CD8-positive, alpha-beta T cell (primary cell): ENCODE measurements at regions of chr17 and their contacts with region 1.

Region 1: GRCh38 chr17:41811549-41812380 is at the start of gene P3H4:
- DNase-seq: peak; percentile 51 to 89 (median 75)
- ATAC-seq: peak; percentile 87
- H3K4me3 ChIP-seq: peak within 1 kb of the TSS; percentile 73 to 93
- H3K4me3 Mint-ChIP-seq: peak within 1 kb of the TSS; percentile 93
- H3K27ac ChIP-seq: peak within 1 kb of the TSS in 1 of 2 experiments; percentile 35
- H3K27ac Mint-ChIP-seq: peak within 1 kb of the TSS; percentile 55
- H3K4me1 ChIP-seq: peaks cover 26% of the 10 kb centered on the region
- H3K4me1 Mint-ChIP-seq: peaks cover 23% of the 10 kb centered on the region
- H3K27me3 ChIP-seq: no peaks in the 10 kb centered on the region
- H3K27me3 Mint-ChIP-seq: peaks cover 2% of the 10 kb centered on the region
- CTCF ChIP-seq: peak; percentile 51
- total RNA-seq, gene P3H4: 0.89 to 1.0 TPM

Region 2: GRCh38 chr17:41750862-41751261 is 60.9 kb before region 1 on chr17:
- CTCF ChIA-PET with region 1: no interaction called
- POLR2A ChIA-PET with region 1: no interaction called
- intact Hi-C with region 1: no loop called
- DNase-seq: no peak
- ATAC-seq: no peak
- H3K4me3 ChIP-seq: no peak overlapping the region
- H3K4me3 Mint-ChIP-seq: no peak overlapping the region
- H3K27ac ChIP-seq: no peak overlapping the region
- H3K27ac Mint-ChIP-seq: no peak overlapping the region
- H3K4me1 ChIP-seq: no peaks in the 10 kb centered on the region
- H3K4me1 Mint-ChIP-seq: no peaks in the 10 kb centered on the region
- H3K27me3 ChIP-seq: no peaks in the 10 kb centered on the region
- H3K27me3 Mint-ChIP-seq: peaks cover 10% of the 10 kb centered on the region
- CTCF ChIP-seq: no peak

Region 3: DNA sequence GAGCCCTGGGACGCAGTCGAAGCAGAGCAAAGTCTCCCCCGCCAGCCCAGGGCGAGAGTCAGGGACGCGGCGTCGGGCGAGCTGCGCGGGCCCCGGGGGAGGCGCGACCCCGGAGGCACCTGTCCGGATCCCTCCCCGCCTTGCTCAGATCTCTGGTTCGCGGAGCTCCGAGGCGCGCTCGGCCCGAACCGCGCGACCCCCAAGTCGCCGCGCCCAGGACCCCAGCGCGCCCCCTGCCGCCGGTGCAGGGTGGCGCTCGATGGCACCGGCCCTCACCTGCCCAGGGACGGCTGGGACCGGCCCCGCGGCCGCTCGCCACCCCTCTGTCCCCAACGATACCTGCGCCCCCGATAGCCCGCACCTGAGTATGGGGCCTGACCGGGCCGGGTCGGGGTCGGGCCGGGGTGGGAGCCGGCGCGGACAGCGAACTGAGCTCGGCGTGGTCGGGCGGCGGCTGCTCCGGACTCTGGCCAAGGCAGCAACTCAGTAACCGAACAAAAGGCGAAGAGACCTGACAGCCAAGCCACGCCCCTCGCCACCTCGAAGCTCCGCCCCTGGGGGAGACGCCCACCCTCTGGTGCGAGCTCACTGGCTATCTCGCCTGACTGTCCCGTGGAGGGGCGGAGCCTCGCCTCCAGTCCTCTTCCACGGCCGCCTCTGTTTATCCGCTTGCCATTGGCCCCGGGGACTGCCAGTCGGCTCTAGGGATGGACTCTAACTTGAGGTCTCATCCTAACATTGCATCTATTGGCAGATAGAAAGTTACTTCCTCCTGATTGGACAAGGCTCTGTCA is 25.3 kb before region 1 on chr17 and contains the start of gene JUP:
- CTCF ChIA-PET with region 1: interaction called, 12 read pairs
- POLR2A ChIA-PET with region 1: no interaction called
- intact Hi-C with region 1: no loop called
- DNase-seq: peak; percentile 69 to 92 (median 88)
- ATAC-seq: peak; percentile 93
- H3K4me3 ChIP-seq: peak within 1 kb of the TSS; percentile 33 to 49
- H3K4me3 Mint-ChIP-seq: peak within 1 kb of the TSS; percentile 80
- H3K27ac ChIP-seq: no peak within 1 kb of the TSS
- H3K27ac Mint-ChIP-seq: no peak within 1 kb of the TSS
- H3K4me1 ChIP-seq: peaks cover 25% of the 10 kb centered on the region
- H3K4me1 Mint-ChIP-seq: peaks cover 36% of the 10 kb centered on the region
- H3K27me3 ChIP-seq: peaks cover 10 to 26% of the 10 kb centered on the region in 2 experiments
- H3K27me3 Mint-ChIP-seq: peaks cover 32% of the 10 kb centered on the region
- CTCF ChIP-seq: peak; percentile 27
- total RNA-seq, gene JUP: 1.0 to 1.8 TPM